RWPE1 (cell line): ENCODE measurements at regions of chr1 and their contacts with region 1.

Region 1: GRCh38 chr1:7207875-7208646 is 422.8 kb downstream of the CAMTA1 start:
- DNase-seq: peak; percentile 58
- H3K27ac ChIP-seq: no peak overlapping the region
- CTCF ChIP-seq: peak; percentile 29

Region 2: GRCh38 chr1:7042322-7043190 is 165.5 kb before region 1 on chr1:
- CTCF ChIA-PET with region 1: interaction called, 19 read pairs
- POLR2A ChIA-PET with region 1: interaction called, 4 read pairs
- DNase-seq: peak; percentile 67
- H3K27ac ChIP-seq: no peak overlapping the region
- CTCF ChIP-seq: peak; percentile 57

Region 3: GRCh38 chr1:7218210-7218832 is 10.3 kb after region 1 on chr1:
- CTCF ChIA-PET with region 1: no interaction called
- POLR2A ChIA-PET with region 1: no interaction called
- DNase-seq: peak; percentile 55
- H3K27ac ChIP-seq: no peak overlapping the region
- CTCF ChIP-seq: peak; percentile 81

Region 4: DNA sequence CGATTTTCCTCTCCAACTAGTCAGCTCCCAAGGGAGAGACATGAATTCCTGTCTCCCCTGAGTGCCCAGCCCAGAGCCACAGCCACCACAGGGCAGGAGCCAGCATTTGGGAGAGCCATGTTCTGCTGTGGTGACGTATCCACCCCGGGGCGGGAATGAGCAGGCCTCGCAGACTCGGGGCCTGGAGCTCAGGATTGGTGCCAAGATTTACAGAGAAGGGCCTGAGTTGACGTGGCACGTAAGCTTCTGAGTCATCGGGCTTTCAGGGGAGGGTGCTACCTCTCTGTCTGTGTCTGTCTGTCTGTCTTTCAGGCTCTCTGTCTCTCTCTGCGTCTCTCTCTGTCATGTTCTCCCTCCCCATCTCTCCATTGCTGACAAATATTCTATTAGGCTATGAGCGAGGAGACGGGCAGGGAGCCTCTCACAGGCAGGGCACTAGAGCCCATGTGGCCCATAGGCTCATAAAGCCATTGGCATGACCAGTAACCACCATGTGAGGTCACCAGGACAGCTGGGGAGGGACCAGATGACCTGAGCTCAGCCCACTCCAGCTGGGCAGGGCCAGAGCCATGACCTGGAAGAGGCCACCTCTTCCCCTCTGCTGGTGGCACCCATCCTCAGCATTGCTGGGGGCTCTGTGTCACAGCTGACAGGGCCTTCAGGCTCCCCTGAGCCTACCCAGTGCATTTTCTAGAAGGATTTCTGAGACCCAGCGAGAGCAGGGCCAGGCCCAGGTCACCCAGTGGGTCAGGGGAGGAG is 263.0 kb after region 1 on chr1:
- CTCF ChIA-PET with region 1: no interaction called
- POLR2A ChIA-PET with region 1: no interaction called
- DNase-seq: peak; percentile 98
- H3K27ac ChIP-seq: peak overlapping the region; percentile 89
- CTCF ChIP-seq: no peak